ENCODE measurements at regions of chr13 and their contacts with region 1.

Region 1: DNA sequence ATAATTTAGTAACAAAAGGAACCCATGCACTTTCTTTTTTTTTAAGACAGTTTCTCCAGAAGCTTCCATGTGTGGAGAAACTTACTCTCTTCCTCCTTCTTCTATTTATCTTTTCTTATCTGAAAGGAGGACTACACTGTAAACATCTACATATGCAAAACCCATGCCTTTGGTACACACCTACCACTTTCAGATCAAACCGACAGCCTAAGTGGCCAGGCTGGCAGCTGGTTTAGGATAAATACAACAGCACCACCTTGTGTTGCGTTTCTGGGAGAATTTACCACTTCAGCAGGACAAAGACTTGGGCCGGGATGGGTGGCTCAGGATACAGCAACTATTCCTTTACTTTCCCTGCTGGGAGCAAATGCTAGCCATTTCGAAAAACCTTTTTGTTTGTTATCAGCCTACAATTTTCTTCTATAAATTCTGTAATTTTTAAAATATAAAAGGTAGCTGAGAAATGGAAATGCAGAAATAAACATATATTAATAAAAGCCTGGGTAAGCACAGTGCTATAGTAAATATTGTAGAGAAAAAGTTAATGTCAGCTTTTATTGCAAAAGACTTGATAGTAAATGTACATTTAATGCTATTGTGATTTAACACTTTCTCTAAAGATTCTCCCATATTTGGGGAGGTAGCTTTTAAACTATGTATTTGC is 94.0 kb upstream of the RFC3 start:
- DNase-seq: peak; percentile 86
- ATAC-seq: peak; percentile 83
- H3K4me3 ChIP-seq: no peak overlapping the region
- H3K27ac ChIP-seq: peak overlapping the region; percentile 78
- H3K4me1 ChIP-seq: peaks cover 40% of the 10 kb centered on the region
- H3K27me3 ChIP-seq: no peaks in the 10 kb centered on the region
- CTCF ChIP-seq: peak; percentile 65 to 85 (median 74); a peak in 5 of 6 replicates
- EP300 ChIP-seq: 0 out of 4 replicates have a peak, but pooled peaks of 1 of the 2 experiments have one; percentile 34
- POLR2A ChIP-seq: no peak
- RAD21 ChIP-seq: peak; percentile 97

Region 2: GRCh38 chr13:32586080-32586900 is 1137.6 kb before region 1 on chr13 and contains the start of gene PDS5B:
- CTCF ChIA-PET with region 1: interaction called, 4 read pairs
- POLR2A ChIA-PET with region 1: no interaction called
- RAD21 ChIA-PET with region 1: interaction called, 12 read pairs
- SMC1A ChIA-PET with region 1: interaction called, 7 read pairs
- in situ Hi-C with region 1: loop called (anchors 25 kb)
- intact Hi-C with region 1: loop called (anchors 5 kb)
- DNase-seq: peak; percentile 66
- ATAC-seq: peak; percentile 90
- H3K4me3 ChIP-seq: peak within 1 kb of the TSS; percentile 75
- H3K27ac ChIP-seq: peak within 1 kb of the TSS; percentile 84
- H3K4me1 ChIP-seq: peaks cover 4% of the 10 kb centered on the region; the same call in 1 of the 2 replicates
- H3K27me3 ChIP-seq: no peaks in the 10 kb centered on the region
- CTCF ChIP-seq: peak; percentile 68 to 96 (median 69); a peak in 4 of 6 replicates
- EP300 ChIP-seq: no peak
- POLR2A ChIP-seq: peak; percentile 71
- RAD21 ChIP-seq: peak; percentile 82
- polyA plus RNA-seq, gene PDS5B: 15.4 to 16.0 TPM

Region 3: GRCh38 chr13:33228648-33229445 is 495.1 kb before region 1 on chr13:
- CTCF ChIA-PET with region 1: interaction called, 44 read pairs
- POLR2A ChIA-PET with region 1: no interaction called
- RAD21 ChIA-PET with region 1: interaction called, 27 read pairs
- SMC1A ChIA-PET with region 1: interaction called, 15 read pairs
- in situ Hi-C with region 1: loop called (anchors 5 kb)
- intact Hi-C with region 1: loop called (anchors 1 kb)
- DNase-seq: no peak
- ATAC-seq: peak; percentile 94
- H3K4me3 ChIP-seq: no peak overlapping the region
- H3K27ac ChIP-seq: no peak overlapping the region
- H3K4me1 ChIP-seq: no peaks in the 10 kb centered on the region
- H3K27me3 ChIP-seq: no peaks in the 10 kb centered on the region
- CTCF ChIP-seq: peak; percentile 83 to 98 (median 94)
- EP300 ChIP-seq: no peak
- POLR2A ChIP-seq: no peak
- RAD21 ChIP-seq: peak; percentile 98

Region 4: DNA sequence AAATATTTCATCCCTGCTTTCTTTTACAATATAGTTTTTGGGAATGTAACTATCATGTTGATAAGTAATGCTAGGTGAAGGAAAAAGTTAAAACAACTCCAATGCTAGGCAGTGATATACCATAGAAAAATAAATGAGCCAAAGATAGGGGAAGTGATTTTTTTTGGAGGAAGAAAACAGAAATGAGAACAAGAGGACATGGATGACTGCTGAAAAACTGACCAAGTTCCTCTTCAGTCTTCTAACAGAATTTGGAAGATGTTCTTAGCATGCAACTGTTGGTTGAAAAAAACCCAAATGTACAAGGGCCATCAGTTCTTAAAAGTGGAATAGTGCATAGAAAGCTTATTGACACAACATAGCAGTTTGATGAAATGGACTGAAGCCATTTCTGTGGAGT is 175.8 kb before region 1 on chr13:
- CTCF ChIA-PET with region 1: interaction called, 90 read pairs
- POLR2A ChIA-PET with region 1: interaction called, 20 read pairs
- RAD21 ChIA-PET with region 1: interaction called, 132 read pairs
- SMC1A ChIA-PET with region 1: interaction called, 134 read pairs
- in situ Hi-C with region 1: loop called (anchors 5 kb)
- intact Hi-C with region 1: loop called (anchors 1 kb)
- DNase-seq: no peak
- ATAC-seq: peak; percentile 34
- H3K4me3 ChIP-seq: no peak overlapping the region
- H3K27ac ChIP-seq: peak overlapping the region; percentile 26; the same call in 1 of the 2 replicates
- H3K4me1 ChIP-seq: peaks cover 18% of the 10 kb centered on the region
- H3K27me3 ChIP-seq: no peaks in the 10 kb centered on the region
- CTCF ChIP-seq: no peak
- EP300 ChIP-seq: no peak
- POLR2A ChIP-seq: no peak
- RAD21 ChIP-seq: no peak

Region 5: GRCh38 chr13:33694546-33694945 is 29.4 kb before region 1 on chr13:
- CTCF ChIA-PET with region 1: interaction called, 5 read pairs
- POLR2A ChIA-PET with region 1: no interaction called
- RAD21 ChIA-PET with region 1: interaction called, 3 read pairs
- SMC1A ChIA-PET with region 1: interaction called, 12 read pairs
- in situ Hi-C with region 1: no loop called
- intact Hi-C with region 1: no loop called
- DNase-seq: no peak
- ATAC-seq: no peak
- H3K4me3 ChIP-seq: no peak overlapping the region
- H3K27ac ChIP-seq: no peak overlapping the region
- H3K4me1 ChIP-seq: no peaks in the 10 kb centered on the region
- H3K27me3 ChIP-seq: no peaks in the 10 kb centered on the region
- CTCF ChIP-seq: no peak
- EP300 ChIP-seq: no peak
- POLR2A ChIP-seq: no peak
- RAD21 ChIP-seq: no peak

Region 6: GRCh38 chr13:33787051-33787591 is 63.2 kb after region 1 on chr13:
- CTCF ChIA-PET with region 1: no interaction called
- POLR2A ChIA-PET with region 1: no interaction called
- RAD21 ChIA-PET with region 1: interaction called, 3 read pairs
- SMC1A ChIA-PET with region 1: interaction called, 9 read pairs
- in situ Hi-C with region 1: no loop called
- intact Hi-C with region 1: loop called (anchors 5 kb)
- DNase-seq: peak; percentile 33
- ATAC-seq: peak; percentile 91
- H3K4me3 ChIP-seq: peak overlapping the region; percentile 55
- H3K27ac ChIP-seq: peak overlapping the region; percentile 47
- H3K4me1 ChIP-seq: peaks cover 6% of the 10 kb centered on the region; the same call in 1 of the 2 replicates
- H3K27me3 ChIP-seq: no peaks in the 10 kb centered on the region
- CTCF ChIP-seq: no peak
- EP300 ChIP-seq: no peak
- POLR2A ChIP-seq: no peak
- RAD21 ChIP-seq: no peak

Region 7: DNA sequence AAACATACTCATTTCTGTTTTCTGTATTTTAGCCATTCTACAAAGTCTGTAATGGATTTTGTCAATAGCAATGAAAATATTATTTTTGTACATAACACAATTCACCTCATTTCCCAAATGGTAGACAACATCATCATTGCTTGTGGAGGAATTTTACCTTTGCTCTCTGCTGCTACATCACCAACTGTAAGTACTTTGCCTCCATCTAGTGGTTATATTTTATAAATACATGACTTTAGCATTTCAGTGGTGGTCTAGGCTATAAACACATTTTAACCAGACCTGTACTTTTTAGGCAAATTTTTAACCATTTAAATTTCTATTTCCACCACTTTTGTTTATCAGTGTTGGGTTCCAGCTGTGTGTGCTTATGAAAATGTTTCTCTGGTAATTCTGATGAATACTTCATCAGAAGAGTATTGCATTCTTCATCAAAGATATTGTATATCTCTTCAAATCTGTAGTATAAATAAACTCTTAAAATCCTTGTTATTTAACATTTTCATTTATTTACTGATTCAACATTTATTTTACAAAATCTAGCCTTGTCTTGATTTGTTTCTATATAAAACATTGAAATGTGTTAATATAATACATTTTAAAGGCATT is 1440.5 kb after region 1 on chr13:
- CTCF ChIA-PET with region 1: interaction called, 5 read pairs
- POLR2A ChIA-PET with region 1: no interaction called
- RAD21 ChIA-PET with region 1: no interaction called
- SMC1A ChIA-PET with region 1: interaction called, 3 read pairs
- in situ Hi-C with region 1: no loop called
- intact Hi-C with region 1: loop called (anchors 2 kb)
- DNase-seq: peak; percentile 40
- ATAC-seq: peak; percentile 88
- H3K4me3 ChIP-seq: no peak overlapping the region
- H3K27ac ChIP-seq: no peak overlapping the region
- H3K4me1 ChIP-seq: peaks cover 22% of the 10 kb centered on the region
- H3K27me3 ChIP-seq: no peaks in the 10 kb centered on the region
- CTCF ChIP-seq: peak; percentile 47 to 78 (median 51); a peak in 5 of 6 replicates
- EP300 ChIP-seq: no peak
- POLR2A ChIP-seq: no peak
- RAD21 ChIP-seq: peak; percentile 87